ENCODE measurements at regions of chr11 and their contacts with region 1.

Region 1: DNA sequence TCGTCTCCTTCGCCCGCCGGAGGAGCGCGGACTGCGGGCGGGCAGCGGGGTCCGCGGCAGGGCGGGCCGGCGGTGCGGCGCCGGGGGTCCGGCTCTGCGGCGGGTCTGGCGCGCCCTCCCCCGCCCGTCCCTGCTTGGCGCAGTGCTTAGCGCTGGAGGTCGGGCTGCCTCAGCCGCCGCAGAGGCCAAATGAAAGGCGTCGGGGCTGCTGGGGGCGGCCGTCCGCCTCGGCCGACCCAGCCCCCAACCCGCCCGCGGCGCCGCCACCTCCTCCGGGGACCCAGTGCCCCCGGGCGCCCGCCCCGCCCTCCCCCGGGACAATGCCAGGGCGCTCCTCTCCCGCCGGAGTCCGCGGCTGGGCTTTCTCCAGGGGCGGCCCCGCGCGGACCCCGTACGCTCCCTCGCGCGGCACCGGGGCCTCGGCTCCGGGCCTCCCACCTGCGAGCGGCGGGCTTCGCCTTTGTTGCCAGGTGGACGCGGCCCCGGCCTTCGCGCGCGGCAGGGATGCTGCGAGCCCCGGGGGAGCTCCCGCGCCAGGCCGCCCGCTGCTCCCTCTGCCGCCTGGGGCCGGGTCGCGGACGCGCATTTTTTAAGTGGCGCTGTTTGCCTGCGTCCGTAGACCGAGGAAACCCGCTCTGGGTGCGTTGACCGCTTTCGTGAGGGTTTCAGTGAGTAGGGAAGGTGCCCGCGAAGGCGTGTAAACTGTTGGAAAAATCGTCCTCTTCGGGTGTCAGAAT is 583 bp downstream of the APLP2 start:
- DNase-seq: peak; percentile 29
- H3K27ac ChIP-seq: peak overlapping the region; percentile 96
- CTCF ChIP-seq: no peak

Region 2: DNA sequence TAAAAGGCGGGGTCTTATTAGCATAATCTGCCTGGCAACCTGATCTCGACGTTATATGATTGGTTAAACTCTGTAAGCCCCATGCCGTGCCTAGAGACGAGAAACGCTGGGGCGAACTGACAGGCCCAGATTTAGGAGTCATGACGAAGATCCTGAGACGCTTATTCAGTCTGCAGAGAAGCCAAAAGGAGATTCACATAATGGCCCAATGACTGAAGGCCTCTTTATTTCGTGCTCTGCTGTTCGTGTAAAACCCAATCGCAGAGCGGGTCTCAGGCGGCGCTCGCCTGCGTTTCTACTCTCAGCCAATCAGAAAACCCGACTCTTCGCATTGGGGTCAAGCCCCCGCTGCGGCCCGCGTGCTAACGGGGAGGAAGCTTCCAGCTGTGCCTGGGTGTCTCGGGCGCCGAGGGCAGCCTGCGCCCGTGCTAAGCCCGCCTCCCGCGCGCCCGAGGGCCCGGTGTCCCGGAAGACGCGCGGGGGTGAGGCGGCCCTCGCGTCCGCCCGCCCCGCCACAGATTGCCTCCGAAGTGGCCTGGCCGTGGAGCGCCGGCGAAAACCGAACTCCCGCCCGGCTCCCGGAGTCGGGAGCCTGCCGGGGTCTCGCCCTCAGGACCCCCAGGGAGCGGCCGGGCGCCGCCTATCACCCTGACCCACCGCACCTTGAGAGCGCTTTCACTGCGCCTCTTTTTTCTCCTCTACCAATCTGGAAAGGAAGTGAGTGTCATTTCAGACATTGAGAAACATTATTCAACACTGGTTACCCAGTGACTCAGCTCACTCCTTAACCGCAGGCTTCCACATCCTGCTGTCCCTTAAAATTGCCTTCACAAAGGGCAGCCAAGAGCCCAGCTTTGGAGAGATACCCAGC is 67.2 kb before region 1 on chr11:
- CTCF ChIA-PET with region 1: interaction called, 3 read pairs
- POLR2A ChIA-PET with region 1: interaction called, 19 read pairs
- DNase-seq: peak; percentile 100
- H3K27ac ChIP-seq: peak overlapping the region; percentile 100
- CTCF ChIP-seq: no peak

Region 3: GRCh38 chr11:130209128-130209932 is 139.1 kb after region 1 on chr11:
- CTCF ChIA-PET with region 1: no interaction called
- POLR2A ChIA-PET with region 1: no interaction called
- DNase-seq: no peak
- H3K27ac ChIP-seq: no peak overlapping the region
- CTCF ChIP-seq: no peak

Measured in RWPE1 (cell line).